GM10248 (cell line): ENCODE measurements at regions of chr12 and their contacts with region 1.

Region 1: DNA sequence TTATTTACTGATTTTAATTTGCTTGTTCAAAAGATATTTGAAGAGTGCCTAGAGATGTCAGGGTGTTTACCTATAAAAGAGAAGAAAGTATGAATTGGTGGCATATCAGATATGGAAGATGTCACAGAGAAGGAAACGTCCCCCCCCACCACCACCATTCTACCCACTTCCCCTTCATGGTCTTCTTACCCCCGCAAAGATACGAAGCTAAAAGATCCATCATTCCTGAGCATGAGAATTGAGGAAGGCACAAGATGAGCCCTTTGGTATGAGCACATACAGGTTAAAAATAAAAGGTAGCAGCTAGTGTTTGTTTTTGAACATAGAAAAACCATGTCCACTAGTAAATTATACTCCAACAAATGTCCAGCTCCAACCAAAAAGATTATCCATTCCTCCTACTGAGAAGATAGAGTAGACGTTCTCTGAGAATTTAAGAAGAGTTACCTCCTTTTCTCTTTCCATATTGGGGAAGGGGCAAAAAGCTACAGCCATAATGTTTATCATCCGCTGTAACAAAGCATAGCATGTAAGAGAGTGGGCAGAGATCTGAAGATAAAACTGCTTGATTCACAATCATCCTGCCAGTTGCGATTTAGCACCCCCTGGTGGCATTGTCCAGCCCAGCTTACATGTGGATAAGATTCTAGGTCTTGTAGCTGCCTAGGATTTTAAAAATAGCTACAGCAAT is 29.1 kb downstream of the NFYB start:
- DNase-seq: peak; percentile 66
- CTCF ChIP-seq: peak; percentile 87

Region 2: DNA sequence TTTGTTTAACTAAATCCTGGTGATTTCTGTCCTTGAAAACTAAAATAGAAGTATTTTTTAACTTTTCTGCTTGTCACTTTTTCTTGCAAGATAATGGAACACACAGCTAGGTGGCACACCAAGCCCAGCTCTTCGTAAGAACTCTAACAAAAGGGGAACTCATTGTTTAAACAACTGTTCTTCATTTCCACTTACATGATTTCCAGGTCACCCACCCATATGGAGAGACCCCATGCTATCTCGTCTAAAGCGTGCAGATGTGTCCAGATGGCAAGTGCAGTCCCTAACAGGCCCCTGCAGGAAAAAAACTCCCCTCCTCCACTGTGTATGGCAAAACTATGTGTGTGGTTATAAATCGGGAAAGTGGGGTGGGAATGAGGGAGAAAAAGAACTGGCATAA is 224.6 kb before region 1 on chr12:
- CTCF ChIA-PET with region 1: interaction called, 51 read pairs
- POLR2A ChIA-PET with region 1: no interaction called
- DNase-seq: peak; percentile 65
- CTCF ChIP-seq: peak; percentile 58

Region 3: GRCh38 chr12:103965590-103966504 is 143.1 kb before region 1 on chr12 and contains the start of gene TDG:
- CTCF ChIA-PET with region 1: interaction called, 12 read pairs
- POLR2A ChIA-PET with region 1: no interaction called
- DNase-seq: peak; percentile 96
- CTCF ChIP-seq: no peak

Region 4: DNA sequence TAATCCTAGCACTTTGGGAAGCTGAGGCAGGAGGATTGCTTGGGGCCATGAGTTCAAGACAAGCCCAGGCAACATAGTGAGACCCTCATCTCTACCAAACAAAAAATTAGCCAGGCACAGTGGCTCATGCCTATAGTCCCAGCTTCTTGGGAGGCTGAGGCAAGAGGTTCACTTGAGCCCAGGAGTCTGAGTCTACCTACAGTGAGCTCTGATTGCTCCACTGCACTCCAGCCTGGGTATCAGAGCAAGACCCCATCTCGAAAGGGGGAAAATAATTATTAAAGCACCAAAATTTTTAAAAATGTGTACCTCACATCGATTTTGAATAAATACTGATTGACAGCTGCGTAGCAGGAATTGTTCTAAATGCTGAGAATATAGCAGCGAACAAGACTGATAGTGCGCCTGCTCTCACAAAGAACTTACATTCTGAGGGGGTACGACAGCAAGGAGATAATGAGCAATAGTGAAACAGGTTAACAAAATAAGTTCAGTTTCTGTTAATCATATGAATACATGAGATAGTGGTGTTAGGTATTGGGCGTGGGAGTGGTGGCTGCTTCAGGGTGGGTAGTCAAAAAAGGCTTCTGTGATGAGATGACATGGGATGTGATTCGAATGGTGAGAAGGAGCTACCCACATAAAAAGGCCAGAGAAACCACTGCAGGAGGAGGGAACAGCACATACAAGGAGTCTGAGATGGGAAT is 25.0 kb before region 1 on chr12:
- CTCF ChIA-PET with region 1: interaction called, 22 read pairs
- POLR2A ChIA-PET with region 1: no interaction called
- DNase-seq: peak; percentile 63
- CTCF ChIP-seq: no peak

Region 5: DNA sequence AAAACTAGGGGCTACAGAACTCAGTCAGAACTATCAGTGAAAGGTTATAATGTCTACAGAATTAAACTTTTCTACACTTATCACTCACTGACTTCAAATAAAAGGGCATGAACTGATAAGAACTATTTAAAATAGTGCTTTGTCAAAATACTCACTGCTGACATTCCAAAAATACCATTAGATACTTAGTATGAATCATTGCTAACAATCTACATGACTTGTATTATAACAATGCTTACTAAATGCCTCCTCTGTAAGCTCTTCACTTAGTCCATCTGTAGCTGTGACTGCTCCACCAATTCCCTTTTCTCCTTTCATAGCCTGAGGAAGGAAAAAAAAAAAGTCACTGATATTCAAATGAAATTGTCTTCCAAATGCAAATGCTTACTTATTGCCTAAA is 12.1 kb after region 1 on chr12:
- CTCF ChIA-PET with region 1: interaction called, 72 read pairs
- POLR2A ChIA-PET with region 1: no interaction called
- DNase-seq: no peak
- CTCF ChIP-seq: no peak